ENCODE measurements at regions of chr1 and their contacts with region 1.

Region 1: DNA sequence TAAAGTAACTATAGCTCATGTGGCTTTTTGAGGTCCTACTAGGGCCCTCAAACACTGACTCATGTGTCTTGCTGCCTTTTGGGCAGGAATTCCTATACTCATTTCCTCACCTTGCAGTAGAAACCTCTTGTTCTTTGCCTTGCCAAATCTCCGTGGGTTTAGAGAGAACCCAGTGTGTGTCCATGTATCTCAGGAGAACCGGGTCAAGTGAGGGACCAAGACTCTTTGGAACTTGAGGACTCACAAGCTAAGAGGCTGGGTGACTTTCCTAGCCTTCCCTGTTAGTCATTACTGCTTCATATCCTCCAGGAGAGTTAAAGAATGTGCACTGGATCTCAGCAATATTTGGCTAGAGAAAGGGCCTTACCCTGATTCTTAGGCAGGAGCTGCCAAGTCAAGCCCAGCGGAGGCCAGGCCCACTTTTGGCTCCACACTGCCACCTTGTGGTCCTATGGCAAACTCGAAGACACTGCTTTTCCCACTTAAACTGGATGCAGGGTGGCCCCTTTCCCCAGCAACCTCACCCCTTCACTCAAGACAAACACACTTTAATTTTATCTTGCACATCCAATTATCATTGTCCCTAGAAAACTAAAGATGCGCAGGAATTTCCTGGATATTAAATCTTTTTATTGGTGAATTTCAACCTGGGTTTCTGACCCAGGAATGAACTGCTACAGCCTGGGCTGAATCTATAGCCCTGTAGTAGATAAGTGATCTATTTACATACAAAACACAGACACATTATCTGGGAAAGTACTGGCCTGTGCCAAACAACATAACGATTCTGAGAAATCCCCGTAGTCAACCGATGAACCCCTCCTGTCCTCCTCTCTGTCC is 10.6 kb downstream of the AVPR1B start:
- DNase-seq: peak; percentile 85
- ATAC-seq: peak; percentile 87 to 94

Region 2: DNA sequence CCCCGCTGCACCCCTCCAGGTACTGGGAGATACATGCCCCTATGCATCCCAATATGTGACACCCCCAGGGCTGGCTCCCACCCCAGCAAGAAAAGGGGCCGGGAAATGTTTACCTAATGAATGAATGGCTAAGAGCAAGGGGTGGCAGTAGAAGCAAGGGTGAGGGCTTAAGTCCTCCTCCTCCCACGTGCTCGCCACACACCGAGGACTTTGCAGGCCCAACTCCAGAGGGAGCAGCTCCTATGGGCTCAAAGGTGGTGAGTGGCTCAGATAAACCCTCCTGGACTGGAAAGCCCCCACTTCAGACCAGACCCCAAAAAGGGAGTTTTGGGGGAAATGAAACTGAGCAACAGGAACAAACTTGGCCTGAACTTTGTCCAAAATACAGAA is 437.6 kb before region 1 on chr1:
- intact Hi-C with region 1: loop called in 1 of 2 experiments (anchors 10 kb)
- DNase-seq: no peak
- ATAC-seq: peak in 1 of 2 donors; percentile 21

Region 3: GRCh38 chr1:205791568-205792180 is 314.9 kb before region 1 on chr1:
- intact Hi-C with region 1: loop called in 1 of 2 experiments (anchors 10 kb)
- DNase-seq: peak; percentile 63
- ATAC-seq: peak; percentile 85 to 87

Region 4: GRCh38 chr1:205919026-205919746 is 187.4 kb before region 1 on chr1:
- intact Hi-C with region 1: loop called (anchors 2 to 10 kb)
- DNase-seq: peak; percentile 78
- ATAC-seq: peak; percentile 53 to 58

Region 5: GRCh38 chr1:205950280-205950679 is 156.3 kb before region 1 on chr1:
- intact Hi-C with region 1: no loop called
- DNase-seq: no peak
- ATAC-seq: peak; percentile 48 to 56

Region 6: GRCh38 chr1:205983925-205984725 is 122.4 kb before region 1 on chr1:
- intact Hi-C with region 1: loop called (anchors 2 to 5 kb)
- DNase-seq: peak; percentile 77
- ATAC-seq: peak; percentile 80 to 82

Region 7: GRCh38 chr1:206030714-206031113 is 75.8 kb before region 1 on chr1:
- intact Hi-C with region 1: loop called in 1 of 2 experiments (anchors 1 kb)
- DNase-seq: peak; percentile 66
- ATAC-seq: peak; percentile 80 to 90

Measured in left cardiac atrium (tissue), 4 donors.